ENCODE measurements at regions of chr7 and their contacts with region 1.

Region 1: GRCh38 chr7:2354186-2354938 is at the start of gene EIF3B:
- DNase-seq: peak; percentile 91 to 94 (median 93)
- ATAC-seq: peak; percentile 90 to 95 (median 94)
- H3K4me3 ChIP-seq: peak within 1 kb of the TSS; percentile 90 to 100 (median 98)
- H3K27ac ChIP-seq: peak within 1 kb of the TSS; percentile 97 to 100 (median 100)
- H3K4me1 ChIP-seq: peaks cover 0 to 48% (median 35%) of the 10 kb centered on the region in 12 donors
- H3K27me3 ChIP-seq: no peaks in the 10 kb centered on the region
- CTCF ChIP-seq: no peak
- POLR2A ChIP-seq: peak in 1 of 2 donors; percentile 48
- total RNA-seq, gene EIF3B: 57.4 to 95.7 (median 72.4) TPM

Region 2: GRCh38 chr7:1569833-1570633 is 784.3 kb before region 1 on chr7 and contains the start of gene PSMG3:
- intact Hi-C with region 1: loop called in 6 of 10 experiments (anchors 5 to 10 kb)
- DNase-seq: peak; percentile 92 to 96 (median 93)
- ATAC-seq: peak; percentile 92 to 98 (median 96)
- H3K4me3 ChIP-seq: peak within 1 kb of the TSS; percentile 49 to 98 (median 81)
- H3K27ac ChIP-seq: peak within 1 kb of the TSS; percentile 82 to 99 (median 94)
- H3K4me1 ChIP-seq: peaks cover 3 to 42% (median 26%) of the 10 kb centered on the region in 12 donors
- H3K27me3 ChIP-seq: no peaks in the 10 kb centered on the region
- CTCF ChIP-seq: peak in 8 of 12 donors; percentile 6 to 55 (median 30)
- POLR2A ChIP-seq: peak in 1 of 2 donors; percentile 81
- total RNA-seq, gene PSMG3: 7.3 to 27.6 (median 13.3) TPM

Region 3: GRCh38 chr7:1664711-1665548 is 689.4 kb before region 1 on chr7:
- intact Hi-C with region 1: loop called in 2 of 10 experiments (anchors 5 to 10 kb)
- DNase-seq: peak; percentile 55 to 81 (median 64)
- ATAC-seq: peak in 3 of 4 donors; percentile 18 to 56 (median 41)
- H3K4me3 ChIP-seq: peak overlapping the region; percentile 49 to 86 (median 69)
- H3K27ac ChIP-seq: peak overlapping the region; percentile 63 to 85 (median 75)
- H3K4me1 ChIP-seq: peaks cover 0 to 61% (median 41%) of the 10 kb centered on the region in 12 donors
- H3K27me3 ChIP-seq: peaks cover 6 to 74% (median 12%) of the 10 kb centered on the region in 9 donors
- CTCF ChIP-seq: peak; percentile 54 to 88 (median 77)
- POLR2A ChIP-seq: no peak

Region 4: GRCh38 chr7:2241580-2242540 is 112.5 kb before region 1 on chr7 and contains the starts of genes MRM2 and NUDT1:
- intact Hi-C with region 1: loop called in 9 of 10 experiments (anchors 1 to 10 kb)
- DNase-seq: peak; percentile 82 to 92 (median 84)
- ATAC-seq: peak; percentile 67 to 94 (median 91)
- H3K4me3 ChIP-seq: peak within 1 kb of the TSS; percentile 80 to 100 (median 91)
- H3K27ac ChIP-seq: peak within 1 kb of the TSS in 11 of 12 donors; percentile 26 to 81 (median 68)
- H3K4me1 ChIP-seq: peaks cover 0 to 61% (median 17%) of the 10 kb centered on the region in 12 donors
- H3K27me3 ChIP-seq: no peaks in the 10 kb centered on the region
- CTCF ChIP-seq: peak in 1 of 12 donors; percentile 22
- POLR2A ChIP-seq: peak in 1 of 2 donors; percentile 58
- total RNA-seq, gene MRM2: 14.2 to 22.3 (median 20.3) TPM
- total RNA-seq, gene NUDT1: 9.8 to 18.4 (median 12.1) TPM

Region 5: DNA sequence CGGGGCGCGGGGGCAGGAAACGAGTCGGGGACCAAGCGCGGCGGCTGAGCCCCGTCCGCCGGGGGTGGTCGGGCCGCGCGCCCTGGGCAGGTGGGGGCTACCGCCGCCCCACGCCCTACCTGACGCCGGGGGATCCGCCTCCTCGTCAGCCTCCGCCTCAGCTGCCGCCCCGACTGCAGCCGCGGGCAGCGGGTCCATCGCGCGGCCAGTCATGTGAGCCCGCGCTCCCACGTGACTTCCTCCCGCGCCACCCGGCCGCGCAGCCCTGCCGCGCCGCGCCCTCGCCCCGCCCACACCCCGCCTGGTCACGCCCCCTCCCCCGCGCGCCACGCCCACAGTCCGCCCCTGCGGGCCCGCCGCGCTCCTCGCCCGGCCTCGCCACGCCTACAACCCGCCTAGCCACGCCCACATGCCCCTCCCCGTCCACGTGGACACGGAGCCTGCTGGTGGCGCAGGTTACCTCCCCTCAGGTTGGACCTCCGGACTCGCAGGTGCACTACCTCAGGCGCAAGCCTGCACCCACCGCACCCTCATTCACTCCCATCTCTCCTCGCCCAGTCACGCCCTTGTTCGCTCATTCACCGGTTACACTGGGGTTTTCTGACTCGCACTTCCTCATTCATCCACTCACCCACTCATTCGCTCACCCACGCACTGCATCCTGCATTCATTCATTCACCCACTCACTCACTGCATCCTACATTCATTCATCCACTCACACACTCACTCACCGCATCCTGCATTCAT is 40.0 kb before region 1 on chr7 and contains the start of gene SNX8:
- intact Hi-C with region 1: loop called in 1 of 10 experiments (anchors 2 kb)
- DNase-seq: peak; percentile 89 to 96 (median 89)
- ATAC-seq: peak; percentile 90 to 99 (median 98)
- H3K4me3 ChIP-seq: peak within 1 kb of the TSS; percentile 44 to 97 (median 93)
- H3K27ac ChIP-seq: peak within 1 kb of the TSS; percentile 10 to 88 (median 66)
- H3K4me1 ChIP-seq: peaks cover 0 to 26% (median 5%) of the 10 kb centered on the region in 12 donors
- H3K27me3 ChIP-seq: no peaks in the 10 kb centered on the region
- CTCF ChIP-seq: peak in 1 of 12 donors; percentile 4
- POLR2A ChIP-seq: peak in 1 of 2 donors; percentile 66
- total RNA-seq, gene SNX8: 5.4 to 44.6 (median 21.5) TPM

Region 6: GRCh38 chr7:2465928-2466327 is 111.6 kb after region 1 on chr7:
- intact Hi-C with region 1: loop called in 1 of 10 experiments (anchors 5 kb)
- DNase-seq: peak in 1 of 5 donors; percentile 14
- ATAC-seq: no peak
- H3K4me3 ChIP-seq: no peak overlapping the region
- H3K27ac ChIP-seq: no peak overlapping the region
- H3K4me1 ChIP-seq: peaks cover 0 to 9% (median under 1%) of the 10 kb centered on the region in 12 donors
- H3K27me3 ChIP-seq: peaks cover 0 to 6% (median 0%) of the 10 kb centered on the region in 9 donors
- CTCF ChIP-seq: no peak
- POLR2A ChIP-seq: no peak